Dorsolateral prefrontal cortex (tissue), 120 donors: ENCODE measurements at regions of chr5 and their contacts with region 1.

Region 1: GRCh38 chr5:152437861-152438260 is 32.8 kb upstream of the NMUR2 start:
- DNase-seq: no peak
- H3K4me3 ChIP-seq: no peak overlapping the region
- H3K27ac ChIP-seq: peak overlapping the region in 5 of 59 donors; percentile 10 to 97 (median 92)
- H3K27me3 ChIP-seq: no peaks in the 10 kb centered on the region
- CTCF ChIP-seq: no peak

Region 2: DNA sequence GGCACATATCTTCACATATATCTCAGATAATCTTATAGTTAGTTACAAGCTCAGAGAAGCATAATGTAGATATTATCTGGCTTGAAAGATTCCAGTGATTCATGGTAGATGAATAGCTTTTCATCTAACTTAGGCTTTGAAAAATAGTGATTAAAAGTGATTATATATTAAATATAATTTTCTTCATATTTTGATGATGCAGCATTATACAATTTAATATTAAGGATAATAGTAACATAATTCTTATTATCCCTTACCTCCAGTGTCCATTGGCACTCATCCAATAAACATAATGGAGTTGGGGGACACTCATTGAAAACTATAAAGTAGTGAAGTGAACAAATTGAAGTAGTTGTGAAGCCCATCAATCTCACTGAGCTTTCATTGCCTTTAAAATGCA is 68.6 kb before region 1 on chr5:
- intact Hi-C with region 1: no loop called
- DNase-seq: no peak
- H3K4me3 ChIP-seq: no peak overlapping the region
- H3K27ac ChIP-seq: no peak overlapping the region
- H3K27me3 ChIP-seq: no peaks in the 10 kb centered on the region
- CTCF ChIP-seq: no peak

Region 3: DNA sequence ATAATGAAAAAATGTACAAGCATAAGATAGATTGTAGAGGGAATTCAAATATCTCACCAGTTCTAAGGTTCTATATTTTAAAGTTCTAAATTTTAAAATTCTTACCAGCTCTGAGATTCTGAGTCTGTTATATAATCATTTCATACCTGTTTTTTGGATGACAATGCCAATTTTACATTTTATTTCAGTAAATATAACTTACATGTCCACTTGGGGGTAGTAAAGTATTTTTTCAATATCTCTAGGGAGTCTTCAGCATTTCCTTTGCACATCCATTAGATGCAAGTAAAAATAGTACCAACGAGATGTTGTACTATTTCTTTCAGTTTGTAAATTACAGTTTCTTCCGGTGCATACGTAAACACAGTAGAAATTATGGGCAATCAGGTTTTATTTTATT is 58.5 kb before region 1 on chr5:
- intact Hi-C with region 1: loop called in 1 of 2 experiments (anchors 5 kb)
- DNase-seq: no peak
- H3K4me3 ChIP-seq: no peak overlapping the region
- H3K27ac ChIP-seq: peak overlapping the region in 50 of 59 donors; percentile 4 to 94 (median 81)
- H3K27me3 ChIP-seq: no peaks in the 10 kb centered on the region
- CTCF ChIP-seq: peak in 51 of 56 donors; percentile 13 to 77 (median 51)

Region 4: DNA sequence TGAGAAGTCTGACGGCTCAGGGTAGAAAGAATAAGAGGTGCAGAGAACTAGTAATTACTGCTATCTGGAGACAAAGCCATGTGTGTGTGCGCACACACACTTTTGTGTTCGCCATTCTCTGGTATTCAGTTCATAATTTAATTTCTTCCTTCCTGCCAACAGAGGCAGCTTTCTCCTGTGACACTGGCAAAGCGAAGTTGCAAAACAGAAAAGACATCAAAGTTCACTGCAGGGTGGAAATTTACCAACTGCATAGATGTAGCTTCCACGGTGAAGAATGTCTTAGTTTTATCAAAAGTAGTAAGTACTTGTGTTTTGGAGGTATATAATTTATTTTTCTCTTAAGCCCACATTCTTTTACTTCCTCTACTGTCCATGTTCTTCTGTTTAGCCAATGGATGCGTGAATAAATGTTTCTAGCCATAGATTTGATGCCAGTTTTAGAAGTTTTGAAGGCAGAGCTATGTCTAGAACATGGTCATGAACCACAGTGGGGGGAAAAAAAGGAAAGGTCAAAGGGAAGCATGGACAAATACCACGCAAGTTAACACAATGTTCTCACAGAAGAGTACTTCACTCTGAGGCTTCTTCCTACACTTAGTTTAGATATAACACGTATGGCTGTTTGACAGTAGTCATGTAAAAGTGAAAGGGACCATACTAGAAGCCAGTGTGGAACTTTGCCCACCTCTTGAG is 516.1 kb after region 1 on chr5:
- intact Hi-C with region 1: no loop called
- DNase-seq: no peak
- H3K4me3 ChIP-seq: no peak overlapping the region
- H3K27ac ChIP-seq: no peak overlapping the region
- H3K27me3 ChIP-seq: no peaks in the 10 kb centered on the region
- CTCF ChIP-seq: no peak